Endothelial cell of umbilical vein (primary cell): ENCODE measurements at regions of chr4 and their contacts with region 1.

Region 1: DNA sequence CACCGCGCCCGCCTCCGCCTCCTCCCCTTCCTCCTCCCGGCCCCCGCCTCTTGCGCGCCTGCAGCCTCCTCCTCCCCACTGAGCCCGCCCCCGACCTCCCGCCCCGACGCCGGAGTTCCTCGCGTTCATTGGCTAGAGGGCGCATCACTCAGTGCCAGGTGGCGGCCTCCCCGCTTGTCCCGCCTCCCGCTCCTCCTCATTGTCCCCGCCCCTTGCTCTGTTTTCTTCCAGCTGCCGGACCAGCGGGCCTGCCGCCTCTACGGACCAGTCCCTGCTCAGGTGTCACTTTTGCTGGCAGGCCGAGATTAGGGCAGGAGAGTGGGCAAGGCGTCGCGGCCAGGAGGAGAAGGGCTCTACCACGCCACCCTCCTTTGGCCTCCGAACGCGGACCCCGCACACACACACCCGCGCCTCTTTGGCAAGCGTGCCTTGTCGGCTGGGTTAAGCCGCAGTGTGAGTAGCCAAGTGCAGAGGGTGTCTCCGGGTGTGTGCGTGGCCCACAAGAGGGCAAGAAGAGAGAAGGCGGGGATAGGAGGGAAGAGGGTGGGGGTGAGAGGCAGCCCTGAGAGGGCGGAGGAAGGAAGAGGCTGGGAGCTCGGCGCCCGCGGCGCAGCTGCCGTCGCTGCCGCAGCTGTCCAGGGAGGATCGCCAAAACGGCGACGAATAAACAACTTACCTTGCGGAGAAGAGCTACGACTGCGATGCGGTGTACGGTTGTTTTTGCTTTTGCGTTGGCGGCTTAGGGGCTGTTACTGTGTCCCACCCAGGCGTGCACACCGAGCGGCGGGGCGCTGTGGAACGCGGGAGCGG is 436 bp upstream of the PPP3CA start:
- DNase-seq: peak; percentile 98
- H3K4me3 ChIP-seq: peak overlapping the region; percentile 52 to 97 (median 54)
- H3K27ac ChIP-seq: peak overlapping the region; percentile 70
- H3K4me1 ChIP-seq: peaks cover 15% of the 10 kb centered on the region
- H3K27me3 ChIP-seq: no peaks in the 10 kb centered on the region
- CTCF ChIP-seq: peak in 1 of 2 donors; percentile 12
- POLR2A ChIP-seq: no peak

Region 2: DNA sequence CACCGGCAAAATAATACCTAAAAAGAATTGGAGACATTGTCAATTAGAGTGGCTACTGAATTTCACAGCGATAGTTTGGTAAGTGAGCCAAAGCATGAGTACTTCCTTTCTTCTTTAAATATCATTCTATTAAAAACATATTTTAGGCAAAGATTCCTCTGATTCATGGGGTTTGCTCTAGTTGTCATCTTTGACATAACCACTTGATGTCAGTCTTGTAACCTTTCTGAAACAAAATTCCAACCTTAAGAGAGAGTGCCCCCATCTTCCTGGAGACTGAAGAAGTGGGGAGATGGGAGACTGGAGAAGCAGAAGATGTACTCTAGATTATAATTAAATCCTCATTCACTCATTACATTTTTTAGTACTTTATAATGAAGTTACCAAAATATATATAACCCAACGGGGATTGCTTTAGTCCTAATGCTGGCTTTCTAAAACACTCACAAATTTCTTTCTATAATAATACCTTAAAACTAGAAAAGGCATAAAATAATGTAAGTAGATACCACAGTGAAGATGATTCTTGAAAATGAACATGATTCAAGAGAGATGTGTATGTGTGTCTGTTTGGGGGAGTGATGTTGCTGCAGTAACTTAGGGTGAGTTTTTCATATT is 926.3 kb before region 1 on chr4:
- CTCF ChIA-PET with region 1: no interaction called
- POLR2A ChIA-PET with region 1: no interaction called
- dilution Hi-C with region 1: no loop called
- intact Hi-C with region 1: loop called (anchors 2 kb)
- DNase-seq: peak; percentile 73
- H3K4me3 ChIP-seq: no peak overlapping the region
- H3K27ac ChIP-seq: peak overlapping the region; percentile 43
- H3K4me1 ChIP-seq: peaks cover 18% of the 10 kb centered on the region
- H3K27me3 ChIP-seq: no peaks in the 10 kb centered on the region
- CTCF ChIP-seq: peak; percentile 30 to 44
- POLR2A ChIP-seq: no peak

Region 3: GRCh38 chr4:101037938-101038413 is 309.8 kb before region 1 on chr4:
- CTCF ChIA-PET with region 1: no interaction called
- POLR2A ChIA-PET with region 1: no interaction called
- dilution Hi-C with region 1: no loop called
- intact Hi-C with region 1: loop called (anchors 2 kb)
- DNase-seq: peak; percentile 78
- H3K4me3 ChIP-seq: no peak overlapping the region
- H3K27ac ChIP-seq: peak overlapping the region; percentile 83
- H3K4me1 ChIP-seq: peaks cover 18% of the 10 kb centered on the region
- H3K27me3 ChIP-seq: no peaks in the 10 kb centered on the region
- CTCF ChIP-seq: no peak
- POLR2A ChIP-seq: no peak

Region 4: DNA sequence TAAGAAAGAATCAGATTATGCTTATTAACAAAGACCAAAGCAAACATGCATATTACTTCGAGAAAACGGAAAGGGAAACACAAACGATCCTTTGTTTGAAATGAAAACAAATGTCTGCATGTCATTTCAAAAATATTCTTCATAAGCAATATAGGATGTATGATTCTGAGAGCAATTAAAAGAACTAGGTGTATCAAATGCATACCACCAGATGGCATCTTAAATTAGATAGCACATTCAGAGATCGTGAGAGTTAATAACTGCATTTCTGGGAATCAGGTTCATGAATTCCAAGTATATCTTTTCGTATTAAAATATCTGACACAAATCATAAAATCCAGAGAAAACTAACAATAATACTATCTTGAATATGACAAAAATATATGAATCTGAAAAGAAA is 159.9 kb before region 1 on chr4:
- CTCF ChIA-PET with region 1: interaction called, 16 read pairs
- POLR2A ChIA-PET with region 1: no interaction called
- dilution Hi-C with region 1: no loop called
- intact Hi-C with region 1: loop called (anchors 1 kb)
- DNase-seq: peak; percentile 71
- H3K4me3 ChIP-seq: no peak overlapping the region
- H3K27ac ChIP-seq: no peak overlapping the region
- H3K4me1 ChIP-seq: peaks cover 15% of the 10 kb centered on the region
- H3K27me3 ChIP-seq: no peaks in the 10 kb centered on the region
- CTCF ChIP-seq: peak in 1 of 2 donors; percentile 15
- POLR2A ChIP-seq: no peak

Region 5: DNA sequence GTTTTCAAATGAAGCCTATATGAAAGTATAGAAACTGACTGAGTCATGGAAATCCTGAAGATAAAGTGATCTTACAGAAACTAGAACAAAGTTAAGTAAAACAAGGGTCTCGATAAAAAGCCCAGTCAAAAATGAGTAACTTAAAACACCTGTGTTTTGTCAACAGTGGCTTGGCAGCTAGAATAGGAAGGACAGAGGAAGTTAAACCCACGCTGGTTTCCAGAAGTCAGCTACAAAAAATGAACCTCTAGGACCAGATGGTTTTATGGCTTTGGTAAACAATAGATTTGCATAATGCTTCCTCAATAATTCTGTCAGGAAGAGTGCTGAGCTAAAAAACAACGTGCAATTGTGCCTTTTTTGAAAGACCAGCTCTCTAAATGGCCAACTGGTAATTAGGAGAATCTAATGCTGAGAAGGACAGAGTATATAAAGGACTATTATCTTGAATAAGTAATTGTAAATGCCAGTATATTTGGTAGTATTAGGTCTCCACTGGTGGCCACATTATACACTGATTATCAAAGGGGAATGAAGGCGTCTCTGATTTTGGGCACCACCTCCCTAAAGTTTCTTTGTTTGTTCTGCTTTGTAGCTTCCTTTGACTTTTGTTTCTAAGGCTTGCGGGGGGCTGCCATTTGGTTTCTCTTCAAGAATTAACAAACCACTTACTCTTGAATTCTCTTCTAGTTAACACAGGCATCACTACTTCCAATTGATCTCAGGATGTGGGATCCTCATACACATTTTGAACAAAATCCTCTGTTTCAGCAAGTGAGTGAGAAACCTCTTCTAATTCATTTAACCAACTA is 71.8 kb after region 1 on chr4:
- CTCF ChIA-PET with region 1: interaction called, 4 read pairs
- POLR2A ChIA-PET with region 1: interaction called, 3 read pairs
- dilution Hi-C with region 1: no loop called
- intact Hi-C with region 1: loop called (anchors 2 kb)
- DNase-seq: peak; percentile 94
- H3K4me3 ChIP-seq: no peak overlapping the region
- H3K27ac ChIP-seq: no peak overlapping the region
- H3K4me1 ChIP-seq: peaks cover 20% of the 10 kb centered on the region
- H3K27me3 ChIP-seq: no peaks in the 10 kb centered on the region
- CTCF ChIP-seq: no peak
- POLR2A ChIP-seq: peak; percentile 30

Region 6: DNA sequence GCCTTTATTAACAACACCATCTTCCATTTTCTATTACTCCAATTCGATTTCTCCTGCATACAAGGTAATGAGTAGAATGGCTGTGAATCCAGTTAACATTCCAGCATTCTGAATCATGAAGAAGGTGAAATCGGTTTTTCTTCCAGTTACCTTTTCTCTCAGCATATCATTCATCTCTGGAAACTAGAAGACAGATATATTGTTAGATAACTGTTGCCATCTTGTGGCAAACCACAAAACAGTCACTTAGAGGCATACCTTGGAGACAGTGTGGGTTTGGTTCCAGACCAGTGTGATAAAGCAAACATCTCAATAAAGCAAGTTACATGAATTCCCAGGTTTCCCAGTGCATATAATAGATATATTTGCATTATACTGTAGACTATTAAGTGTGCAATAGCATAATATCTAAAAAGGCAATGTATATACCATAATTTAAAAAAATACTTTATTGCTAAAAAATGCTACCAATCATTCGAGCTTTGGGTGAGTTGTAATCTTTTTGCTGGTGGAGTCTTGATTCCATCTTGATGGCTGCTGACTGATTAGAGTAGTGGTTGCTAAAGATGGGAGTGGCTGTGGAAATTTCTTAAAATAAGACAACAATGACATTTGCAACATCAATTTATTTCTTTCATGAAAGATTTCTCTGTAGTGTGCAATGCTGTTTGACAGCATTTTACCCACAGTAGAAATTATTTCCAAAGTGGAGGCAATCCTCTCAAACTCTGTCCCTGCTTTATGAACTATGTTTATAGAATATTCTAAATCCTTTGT is 915.4 kb after region 1 on chr4:
- CTCF ChIA-PET with region 1: interaction called, 4 read pairs
- POLR2A ChIA-PET with region 1: no interaction called
- dilution Hi-C with region 1: no loop called
- intact Hi-C with region 1: loop called (anchors 2 kb)
- DNase-seq: peak; percentile 64
- H3K4me3 ChIP-seq: no peak overlapping the region
- H3K27ac ChIP-seq: no peak overlapping the region
- H3K4me1 ChIP-seq: peaks cover 4% of the 10 kb centered on the region
- H3K27me3 ChIP-seq: no peaks in the 10 kb centered on the region
- CTCF ChIP-seq: peak; percentile 42 to 52
- POLR2A ChIP-seq: no peak